ENCODE measurements at regions of chr15 and their contacts with region 1.

Region 1: GRCh38 chr15:56869573-56869972 is 48.9 kb upstream of the TCF12 start:
- DNase-seq: peak; percentile 54
- ATAC-seq: no peak
- H3K4me3 Mint-ChIP-seq: no peak overlapping the region
- H3K27ac Mint-ChIP-seq: no peak overlapping the region
- H3K4me1 Mint-ChIP-seq: no peaks in the 10 kb centered on the region
- H3K27me3 Mint-ChIP-seq: no peaks in the 10 kb centered on the region

Region 2: GRCh38 chr15:56491110-56491722 is 378.4 kb before region 1 on chr15:
- CTCF ChIA-PET with region 1: interaction called, 23 read pairs
- POLR2A ChIA-PET with region 1: no interaction called
- DNase-seq: peak; percentile 72
- ATAC-seq: peak; percentile 63
- H3K4me3 Mint-ChIP-seq: no peak overlapping the region
- H3K27ac Mint-ChIP-seq: no peak overlapping the region
- H3K4me1 Mint-ChIP-seq: peaks cover 9% of the 10 kb centered on the region
- H3K27me3 Mint-ChIP-seq: peaks cover 10% of the 10 kb centered on the region

Region 3: GRCh38 chr15:56496635-56497034 is 372.9 kb before region 1 on chr15:
- CTCF ChIA-PET with region 1: interaction called, 23 read pairs
- POLR2A ChIA-PET with region 1: no interaction called
- DNase-seq: peak; percentile 23
- ATAC-seq: peak; percentile 79
- H3K4me3 Mint-ChIP-seq: no peak overlapping the region
- H3K27ac Mint-ChIP-seq: no peak overlapping the region
- H3K4me1 Mint-ChIP-seq: peaks cover 14% of the 10 kb centered on the region
- H3K27me3 Mint-ChIP-seq: peaks cover 15% of the 10 kb centered on the region

Region 4: DNA sequence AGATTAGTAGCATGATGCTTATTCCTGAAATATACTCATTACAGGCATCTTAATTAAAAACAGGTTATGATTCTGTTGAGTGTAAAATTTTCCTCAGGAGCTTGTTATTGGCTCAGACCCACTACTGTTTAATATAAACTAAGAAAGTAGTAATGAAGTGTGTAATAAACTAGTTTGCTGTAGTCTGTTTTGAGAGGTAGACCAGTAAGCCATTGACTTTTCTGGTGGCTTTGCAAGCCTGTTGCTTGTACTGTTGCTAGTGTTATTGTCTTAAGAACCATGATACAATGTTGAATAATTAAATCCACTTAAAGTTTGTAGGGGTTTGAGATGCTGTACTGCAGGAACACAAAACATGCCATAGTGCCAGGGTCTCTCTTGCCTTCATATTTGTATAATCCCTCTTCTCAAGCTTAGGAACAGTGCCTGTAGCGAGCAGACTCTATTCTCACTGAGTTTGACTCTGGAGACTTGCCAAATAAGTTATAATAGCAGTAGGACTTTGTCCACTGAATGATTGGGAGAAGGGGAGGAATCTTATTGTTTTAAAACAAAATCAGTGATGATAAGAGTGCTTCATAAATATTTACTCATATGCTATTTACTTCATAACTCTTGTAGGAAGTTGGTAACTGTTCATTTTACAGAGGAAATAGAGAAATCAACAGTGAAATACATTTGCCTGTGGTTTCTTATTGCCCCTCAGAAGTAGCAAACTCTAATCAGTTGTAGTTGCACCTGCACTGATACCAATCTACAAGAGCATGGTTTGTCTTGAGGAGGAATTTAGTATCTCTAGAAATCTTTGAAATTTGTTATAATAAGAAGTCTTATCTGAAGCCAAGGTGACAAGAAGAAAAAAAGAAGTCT is 62.3 kb after region 1 on chr15:
- CTCF ChIA-PET with region 1: no interaction called
- POLR2A ChIA-PET with region 1: no interaction called
- DNase-seq: no peak
- ATAC-seq: no peak
- H3K4me3 Mint-ChIP-seq: no peak overlapping the region
- H3K27ac Mint-ChIP-seq: no peak overlapping the region
- H3K4me1 Mint-ChIP-seq: peaks cover 25% of the 10 kb centered on the region
- H3K27me3 Mint-ChIP-seq: no peaks in the 10 kb centered on the region